Activated naive CD4-positive, alpha-beta T cell treated with anti-CD3 and anti-CD28 coated beads for 36 hours (primary cell): ENCODE measurements at regions of chr18 and their contacts with region 1.

Region 1: GRCh38 chr18:12376718-12377555 is at the start of gene AFG3L2:
- DNase-seq: peak; percentile 100
- H3K4me3 Mint-ChIP-seq: peak within 1 kb of the TSS; percentile 90
- H3K27ac Mint-ChIP-seq: peak within 1 kb of the TSS; percentile 82
- H3K4me1 Mint-ChIP-seq: peaks cover 47% of the 10 kb centered on the region
- H3K27me3 Mint-ChIP-seq: no peaks in the 10 kb centered on the region
- total RNA-seq, gene AFG3L2: 41.8 to 42.9 TPM

Region 2: GRCh38 chr18:11908182-11909060 is 468.5 kb before region 1 on chr18 and contains the start of gene MPPE1:
- CTCF ChIA-PET with region 1: no interaction called
- intact Hi-C with region 1: loop called (anchors 2 kb)
- DNase-seq: peak; percentile 89
- H3K4me3 Mint-ChIP-seq: peak within 1 kb of the TSS; percentile 89
- H3K27ac Mint-ChIP-seq: peak within 1 kb of the TSS; percentile 93
- H3K4me1 Mint-ChIP-seq: peaks cover 24% of the 10 kb centered on the region
- H3K27me3 Mint-ChIP-seq: no peaks in the 10 kb centered on the region
- total RNA-seq, gene MPPE1: 30.4 to 34.3 TPM

Region 3: GRCh38 chr18:12327510-12328178 is 49.3 kb before region 1 on chr18:
- CTCF ChIA-PET with region 1: interaction called, 3 read pairs
- intact Hi-C with region 1: loop called (anchors 2 kb)
- DNase-seq: peak; percentile 87
- H3K4me3 Mint-ChIP-seq: no peak overlapping the region
- H3K27ac Mint-ChIP-seq: no peak overlapping the region
- H3K4me1 Mint-ChIP-seq: no peaks in the 10 kb centered on the region
- H3K27me3 Mint-ChIP-seq: no peaks in the 10 kb centered on the region

Region 4: DNA sequence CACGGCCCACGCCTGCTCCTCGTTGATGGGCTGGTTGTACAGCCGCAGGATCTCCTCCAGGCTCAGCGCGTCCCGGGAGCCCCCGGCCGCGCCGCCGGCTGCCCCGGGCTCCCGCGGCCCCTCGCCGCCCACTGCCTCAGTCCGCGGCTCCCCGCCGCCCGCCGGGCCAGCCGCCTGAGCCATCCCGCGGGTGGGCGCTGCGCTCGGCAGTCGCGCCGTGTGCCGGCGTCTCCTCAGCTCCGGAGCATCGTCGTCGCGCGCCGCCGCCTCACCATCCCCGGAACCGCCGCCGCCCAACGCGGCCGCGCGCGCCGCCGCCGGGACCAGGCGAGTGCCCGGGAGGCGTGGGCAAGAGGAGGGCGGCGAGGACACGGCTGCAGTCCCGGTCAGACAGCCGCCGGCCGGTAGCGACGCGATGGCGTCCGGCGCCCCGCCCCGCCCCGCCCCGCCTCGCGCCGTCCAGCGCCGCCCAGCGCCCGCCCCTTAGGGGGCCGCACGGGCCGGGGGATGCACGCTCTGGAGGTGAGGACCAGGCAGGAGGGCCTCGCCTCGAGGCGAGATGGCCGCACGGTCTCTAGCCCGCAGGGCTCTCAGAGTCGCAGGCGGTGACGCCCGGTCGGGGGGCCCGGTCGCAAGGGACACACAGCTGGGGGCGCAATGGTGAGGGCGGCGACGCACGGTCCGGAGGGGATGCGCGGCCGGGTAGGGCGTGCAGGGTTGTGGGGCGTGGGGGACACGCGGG is 280.9 kb after region 1 on chr18 and contains the start of gene SPIRE1:
- CTCF ChIA-PET with region 1: no interaction called
- intact Hi-C with region 1: loop called (anchors 1 kb)
- DNase-seq: peak; percentile 34
- H3K4me3 Mint-ChIP-seq: peak within 1 kb of the TSS; percentile 76
- H3K27ac Mint-ChIP-seq: no peak within 1 kb of the TSS
- H3K4me1 Mint-ChIP-seq: peaks cover 7% of the 10 kb centered on the region
- H3K27me3 Mint-ChIP-seq: peaks cover 22% of the 10 kb centered on the region
- total RNA-seq, gene SPIRE1: 1.3 to 1.7 TPM

Region 5: DNA sequence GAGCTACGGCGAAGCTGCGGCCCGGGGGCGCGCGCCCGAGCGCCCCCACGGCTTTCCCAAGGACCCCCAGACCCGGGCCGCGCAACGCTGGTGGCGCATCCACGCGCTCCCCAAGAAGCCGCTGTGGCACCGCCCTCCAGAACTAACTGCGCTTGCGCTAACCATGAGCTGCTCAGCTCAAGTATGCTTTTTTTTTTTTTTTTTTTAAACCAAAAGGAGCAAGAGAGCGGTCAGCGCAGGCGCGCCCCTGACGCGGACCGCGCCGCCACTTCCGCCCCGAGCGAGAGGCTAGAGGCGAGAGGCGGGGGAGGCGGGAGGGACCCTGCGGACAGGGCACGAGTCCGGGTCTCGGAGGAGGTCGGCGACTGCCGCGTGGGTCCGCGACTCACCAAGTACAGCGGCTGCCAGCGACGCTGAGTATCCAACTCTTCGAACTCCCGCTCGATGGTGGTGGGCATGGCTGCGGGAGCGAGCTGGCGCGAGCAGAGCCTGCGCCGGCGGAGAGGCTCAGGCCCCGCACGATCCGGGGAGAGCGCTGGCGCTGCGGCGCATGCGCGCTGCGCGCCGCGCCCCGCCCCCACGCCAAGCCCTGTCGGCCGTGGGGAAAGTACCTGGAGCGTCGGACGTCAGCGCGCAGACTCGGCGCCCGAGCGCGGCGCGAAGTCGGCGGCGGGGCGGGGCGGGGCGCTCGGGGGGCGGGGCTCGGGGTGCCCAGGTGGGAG is 506.9 kb after region 1 on chr18 and contains the start of gene PTPN2:
- CTCF ChIA-PET with region 1: no interaction called
- intact Hi-C with region 1: loop called (anchors 1 kb)
- DNase-seq: peak; percentile 92
- H3K4me3 Mint-ChIP-seq: peak within 1 kb of the TSS; percentile 89
- H3K27ac Mint-ChIP-seq: peak within 1 kb of the TSS; percentile 90
- H3K4me1 Mint-ChIP-seq: peaks cover 53% of the 10 kb centered on the region
- H3K27me3 Mint-ChIP-seq: no peaks in the 10 kb centered on the region
- total RNA-seq, gene PTPN2: 68.5 to 71.8 TPM

Region 6: GRCh38 chr18:13137670-13138419 is 760.9 kb after region 1 on chr18:
- CTCF ChIA-PET with region 1: no interaction called
- intact Hi-C with region 1: loop called (anchors 1 kb)
- DNase-seq: peak; percentile 74
- H3K4me3 Mint-ChIP-seq: peak overlapping the region; percentile 96
- H3K27ac Mint-ChIP-seq: peak overlapping the region; percentile 75
- H3K4me1 Mint-ChIP-seq: peaks cover 24% of the 10 kb centered on the region
- H3K27me3 Mint-ChIP-seq: no peaks in the 10 kb centered on the region